ENCODE measurements at regions of chrX and their contacts with region 1.

Region 1: GRCh38 chrX:41084044-41084892 is 977 bp upstream of the USP9X start:
- DNase-seq: peak; percentile 97
- ATAC-seq: peak; percentile 87

Region 2: GRCh38 chrX:40877887-40878286 is 206.4 kb before region 1 on chrX:
- intact Hi-C with region 1: loop called (anchors 10 kb)
- DNase-seq: no peak
- ATAC-seq: no peak

Region 3: GRCh38 chrX:41010188-41010846 is 74.0 kb before region 1 on chrX:
- intact Hi-C with region 1: loop called (anchors 2 kb)
- DNase-seq: peak; percentile 86
- ATAC-seq: peak; percentile 97

Region 4: DNA sequence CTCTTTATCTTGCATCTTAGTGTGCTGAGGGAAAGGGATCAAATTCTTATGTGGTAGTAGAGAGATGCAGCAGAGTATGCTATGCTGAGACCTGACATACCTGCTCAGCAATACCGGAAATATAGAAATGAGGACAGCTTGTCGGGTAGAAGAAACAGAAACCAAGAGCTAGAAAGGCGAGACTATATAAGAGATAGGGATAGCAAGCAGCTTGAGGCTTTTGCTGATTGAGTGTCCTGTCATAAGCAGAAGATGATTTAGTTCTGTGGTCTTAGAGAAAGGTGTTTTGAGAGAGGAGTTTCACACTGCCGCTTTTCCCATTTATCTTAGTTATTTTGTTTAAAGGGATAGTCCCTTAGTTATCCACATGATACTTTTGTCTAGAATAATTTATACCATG is 32.7 kb after region 1 on chrX:
- intact Hi-C with region 1: loop called (anchors 2 kb)
- DNase-seq: no peak
- ATAC-seq: no peak

Measured in Right ventricle myocardium inferior (tissue), 1 donor.